BJ (cell line): ENCODE measurements at regions of chr17 and their contacts with region 1.

Region 1: DNA sequence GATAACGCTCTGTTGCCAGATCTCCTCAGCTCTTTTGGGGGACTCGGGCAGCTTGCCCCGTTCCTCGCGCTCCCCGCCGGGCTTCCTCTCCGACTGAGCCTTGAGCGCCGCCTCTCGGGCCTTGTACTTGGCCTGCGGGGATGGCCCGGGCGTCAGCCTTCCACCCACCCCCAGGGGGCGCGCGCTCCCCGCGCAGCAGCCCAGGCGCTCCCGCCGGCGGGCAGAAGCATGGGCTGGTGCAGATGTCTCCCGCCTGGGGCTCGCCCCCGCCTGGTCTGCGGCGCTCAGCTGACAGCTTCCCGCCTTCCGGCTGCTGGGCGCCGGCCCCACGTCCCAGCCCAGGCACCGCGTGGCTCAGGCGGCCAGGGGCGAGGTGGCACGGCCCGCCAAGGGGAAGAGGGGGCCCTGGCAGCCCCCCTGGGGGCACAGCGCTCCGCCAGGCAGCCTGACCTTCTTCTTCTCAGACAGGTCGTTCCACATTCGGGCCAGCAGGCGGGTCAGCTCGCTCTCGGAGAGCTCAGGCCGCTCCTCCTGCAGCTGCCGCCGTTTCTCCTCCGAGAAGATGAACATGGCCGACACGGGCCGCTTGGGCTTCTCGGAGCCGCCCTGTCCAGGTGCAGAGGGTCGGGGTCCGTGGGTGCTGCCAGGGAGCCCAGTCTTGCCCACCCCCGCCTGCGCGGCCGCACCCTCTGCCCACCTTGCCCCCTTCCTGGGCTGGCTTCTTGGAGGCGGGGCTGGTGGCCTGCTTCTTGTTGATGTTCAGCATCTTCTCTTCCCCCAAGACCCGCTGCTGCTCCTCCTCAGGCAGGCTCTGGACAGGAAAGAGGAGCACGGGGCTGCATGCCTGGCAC is 8.9 kb downstream of the UBTF start:
- DNase-seq: no peak
- H3K4me3 ChIP-seq: no peak overlapping the region
- H3K27me3 ChIP-seq: no peaks in the 10 kb centered on the region
- CTCF ChIP-seq: peak; percentile 83

Region 2: DNA sequence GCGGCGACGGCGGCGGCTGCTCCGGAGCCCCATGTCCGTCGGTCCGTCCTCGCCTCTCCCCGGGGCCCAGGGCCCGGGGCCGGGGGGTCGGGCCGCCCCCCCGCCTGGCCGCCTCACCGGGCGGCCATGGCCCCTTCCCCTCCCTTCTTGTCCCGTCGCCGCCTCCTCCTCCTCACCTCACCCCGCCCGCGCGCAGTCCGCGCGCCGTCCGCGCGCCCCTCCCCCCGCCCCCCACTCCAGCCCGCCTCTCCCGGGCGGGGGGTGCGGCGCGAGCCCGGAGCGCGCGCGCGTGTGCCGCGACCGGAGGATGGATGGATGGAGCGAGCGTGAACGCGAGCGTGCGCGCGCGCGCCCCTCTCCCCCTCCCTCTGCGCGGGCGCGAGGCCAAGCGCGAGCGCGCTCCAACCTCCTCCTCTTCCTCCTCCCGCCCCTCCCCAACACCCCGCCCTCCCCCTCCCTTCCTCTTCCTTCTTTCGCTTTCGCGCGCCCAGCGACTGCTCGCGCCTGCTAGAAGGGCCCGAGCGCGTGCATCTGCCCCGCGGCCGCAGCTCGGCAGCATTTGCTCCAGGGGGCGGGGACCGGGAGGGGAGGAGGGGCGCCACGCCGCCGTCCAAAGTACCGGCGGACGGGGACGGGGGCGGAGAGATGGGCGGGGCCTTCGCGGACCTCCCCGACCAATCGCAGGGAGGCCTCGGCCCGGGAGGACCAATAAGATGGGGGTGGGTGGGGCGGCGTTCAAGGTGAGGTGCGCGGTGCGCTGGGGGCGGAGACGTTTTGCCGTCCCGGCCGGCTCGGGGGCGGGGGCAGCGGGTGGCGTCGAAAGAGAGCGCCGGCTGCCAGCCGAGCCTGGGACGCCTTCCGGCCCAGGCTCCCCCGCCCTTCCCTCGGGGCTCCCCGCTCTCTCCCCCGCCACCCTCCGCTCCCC is 10.8 kb before region 1 on chr17 and contains the start of gene ATXN7L3:
- CTCF ChIA-PET with region 1: interaction called, 19 read pairs
- POLR2A ChIA-PET with region 1: no interaction called
- DNase-seq: peak; percentile 84
- H3K4me3 ChIP-seq: peak within 1 kb of the TSS; percentile 74
- H3K27me3 ChIP-seq: no peaks in the 10 kb centered on the region
- CTCF ChIP-seq: no peak
- polyA plus RNA-seq, gene ATXN7L3: 47.0 and 53.9 TPM in 2 replicates

Region 3: DNA sequence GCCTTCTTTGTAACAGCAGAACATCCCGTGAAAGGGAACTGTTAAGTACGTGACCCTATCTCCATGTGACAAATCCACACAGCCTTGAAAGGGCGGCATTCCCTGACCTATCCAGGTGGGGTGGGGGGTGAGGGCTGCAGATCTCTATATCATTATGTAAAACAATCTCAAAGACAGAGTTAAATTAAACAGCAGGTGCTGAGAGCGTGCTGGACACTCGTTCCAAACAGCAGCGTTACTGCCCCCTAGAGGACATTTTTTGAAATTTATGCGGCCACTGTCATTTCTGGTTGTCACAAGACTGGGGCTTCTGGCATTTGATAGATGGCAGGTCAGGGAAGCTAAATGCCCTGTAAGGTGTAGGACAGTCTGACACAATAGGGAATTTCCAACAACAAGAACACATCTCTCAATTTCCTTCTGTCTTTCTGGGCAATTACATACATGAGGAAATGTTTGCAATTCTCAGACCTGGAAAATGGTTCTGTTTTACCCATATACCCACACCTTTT is 120.7 kb after region 1 on chr17:
- CTCF ChIA-PET with region 1: interaction called, 59 read pairs
- POLR2A ChIA-PET with region 1: no interaction called
- DNase-seq: peak; percentile 24
- H3K4me3 ChIP-seq: no peak overlapping the region
- H3K27me3 ChIP-seq: 0 out of 2 replicates have a peak, but pooled peaks cover 2% of the 10 kb centered on the region
- CTCF ChIP-seq: peak; percentile 80

Region 4: GRCh38 chr17:44344939-44345453 is 134.4 kb after region 1 on chr17 and contains the start of gene GRN:
- CTCF ChIA-PET with region 1: interaction called, 22 read pairs
- POLR2A ChIA-PET with region 1: no interaction called
- DNase-seq: peak; percentile 96
- H3K4me3 ChIP-seq: peak within 1 kb of the TSS; percentile 87
- H3K27me3 ChIP-seq: no peaks in the 10 kb centered on the region
- CTCF ChIP-seq: no peak
- polyA plus RNA-seq, gene GRN: 213 and 581 TPM in 2 replicates

Region 5: DNA sequence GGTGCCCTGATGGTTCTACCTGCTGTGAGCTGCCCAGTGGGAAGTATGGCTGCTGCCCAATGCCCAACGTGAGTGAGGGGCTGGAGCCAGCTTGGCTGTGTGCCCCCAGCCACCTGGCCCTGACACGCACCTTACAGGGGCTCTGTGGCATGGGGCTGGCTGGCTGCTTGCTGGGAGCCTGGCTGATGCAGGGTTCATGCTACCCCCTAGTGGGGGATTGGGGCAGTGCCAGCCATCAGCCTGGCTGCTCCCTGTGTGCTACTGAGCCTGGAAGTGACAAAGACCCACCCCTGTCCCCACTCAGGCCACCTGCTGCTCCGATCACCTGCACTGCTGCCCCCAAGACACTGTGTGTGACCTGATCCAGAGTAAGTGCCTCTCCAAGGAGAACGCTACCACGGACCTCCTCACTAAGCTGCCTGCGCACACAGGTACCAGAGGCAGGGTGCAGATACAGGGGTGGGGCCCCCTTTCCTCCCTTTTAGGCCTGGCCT is 140.2 kb after region 1 on chr17:
- CTCF ChIA-PET with region 1: interaction called, 22 read pairs
- POLR2A ChIA-PET with region 1: no interaction called
- DNase-seq: no peak
- H3K4me3 ChIP-seq: no peak overlapping the region
- H3K27me3 ChIP-seq: no peaks in the 10 kb centered on the region
- CTCF ChIP-seq: peak; percentile 85